ENCODE measurements at regions of chr17 and their contacts with region 1.

Region 1: GRCh38 chr17:41548844-41549595 is 20.9 kb upstream of the KRT19 start:
- DNase-seq: peak; percentile 80 to 95
- H3K4me3 ChIP-seq: peak overlapping the region in 3 of 4 experiments; percentile 13 to 43 (median 16); a peak in 4 of 8 replicates
- H3K27ac ChIP-seq: peak overlapping the region; percentile 64; the same call in 1 of the 2 replicates
- H3K4me1 ChIP-seq: peaks cover 8 to 24% (median 13%) of the 10 kb centered on the region in 4 experiments
- H3K27me3 ChIP-seq: no peaks in the 10 kb centered on the region; a peak in 2 of 7 replicates
- CTCF ChIP-seq: peak; percentile 87 to 97 (median 96)
- EP300 ChIP-seq: peak in 1 of 2 experiments; percentile 51; a peak in 1 of 3 replicates
- POLR2A ChIP-seq: peak in 1 of 2 experiments; percentile 63; a peak in 1 of 3 replicates
- RAD21 ChIP-seq: peak; percentile 91 to 96

Region 2: GRCh38 chr17:40854159-40854814 is 694.7 kb before region 1 on chr17:
- CTCF ChIA-PET with region 1: interaction called, 12 read pairs
- POLR2A ChIA-PET with region 1: no interaction called
- DNase-seq: no peak
- H3K4me3 ChIP-seq: no peak overlapping the region
- H3K27ac ChIP-seq: no peak overlapping the region
- H3K4me1 ChIP-seq: peaks cover 0 to 8% (median 2%) of the 10 kb centered on the region in 4 experiments; a peak in 3 of 7 replicates
- H3K27me3 ChIP-seq: no peaks in the 10 kb centered on the region; a peak in 1 of 7 replicates
- CTCF ChIP-seq: no peak
- EP300 ChIP-seq: no peak
- POLR2A ChIP-seq: no peak
- RAD21 ChIP-seq: no peak

Region 3: DNA sequence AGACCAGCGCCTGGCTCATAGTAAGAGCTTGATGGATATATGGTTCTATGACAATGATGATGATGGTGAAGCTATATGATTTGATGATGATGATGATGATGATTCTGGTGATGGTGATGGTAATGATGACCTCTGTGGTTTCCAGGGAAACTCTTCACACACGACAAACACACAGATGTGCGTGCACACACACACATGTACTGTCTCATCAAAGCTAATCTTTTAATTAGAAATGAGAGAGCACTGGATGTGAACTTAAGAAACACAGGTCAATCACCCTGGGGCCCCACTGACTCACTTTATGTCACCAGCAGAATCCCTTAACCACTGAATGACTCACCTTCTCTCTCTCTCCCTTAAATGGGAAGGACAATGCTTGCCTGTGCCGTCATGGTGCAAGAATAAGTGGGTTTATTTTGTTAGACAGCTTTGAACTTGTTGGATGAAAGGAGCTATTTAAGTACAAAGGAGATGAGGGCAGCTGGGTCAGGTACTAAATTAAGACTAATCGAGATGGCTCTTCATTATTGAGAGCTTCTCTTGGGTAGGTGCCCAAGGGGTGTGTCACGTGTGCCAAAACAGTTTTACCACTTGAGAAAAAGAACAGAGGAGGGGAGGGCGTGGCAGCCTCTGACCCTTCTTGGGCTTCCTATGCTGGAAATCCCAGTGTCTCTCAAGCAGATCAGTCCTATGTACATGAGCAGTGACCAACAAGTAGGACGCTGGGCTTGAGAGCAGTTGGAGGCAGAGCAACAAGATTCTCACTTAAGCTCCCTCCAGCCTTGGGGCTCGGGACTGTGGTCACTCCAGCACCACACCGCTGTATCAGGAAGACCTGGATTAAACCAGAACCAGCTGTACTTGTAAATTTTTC is 145.0 kb before region 1 on chr17:
- CTCF ChIA-PET with region 1: interaction called, 15 read pairs
- POLR2A ChIA-PET with region 1: no interaction called
- DNase-seq: no peak
- H3K4me3 ChIP-seq: no peak overlapping the region
- H3K27ac ChIP-seq: no peak overlapping the region
- H3K4me1 ChIP-seq: no peaks in the 10 kb centered on the region; a peak in 1 of 7 replicates
- H3K27me3 ChIP-seq: no peaks in the 10 kb centered on the region; a peak in 1 of 7 replicates
- CTCF ChIP-seq: no peak
- EP300 ChIP-seq: no peak
- POLR2A ChIP-seq: no peak
- RAD21 ChIP-seq: no peak

Region 4: GRCh38 chr17:41462705-41463104 is 86.3 kb before region 1 on chr17:
- CTCF ChIA-PET with region 1: interaction called, 17 read pairs
- POLR2A ChIA-PET with region 1: interaction called, 3 read pairs
- DNase-seq: no peak
- H3K4me3 ChIP-seq: no peak overlapping the region
- H3K27ac ChIP-seq: no peak overlapping the region
- H3K4me1 ChIP-seq: no peaks in the 10 kb centered on the region
- H3K27me3 ChIP-seq: no peaks in the 10 kb centered on the region
- CTCF ChIP-seq: no peak
- EP300 ChIP-seq: no peak
- POLR2A ChIP-seq: no peak
- RAD21 ChIP-seq: no peak

Region 5: GRCh38 chr17:41538565-41538991 is 10.4 kb before region 1 on chr17:
- CTCF ChIA-PET with region 1: interaction called, 79 read pairs
- POLR2A ChIA-PET with region 1: interaction called, 5 read pairs
- DNase-seq: no peak
- H3K4me3 ChIP-seq: no peak overlapping the region
- H3K27ac ChIP-seq: no peak overlapping the region
- H3K4me1 ChIP-seq: peaks cover 10 to 23% (median 16%) of the 10 kb centered on the region in 4 experiments
- H3K27me3 ChIP-seq: no peaks in the 10 kb centered on the region; a peak in 1 of 7 replicates
- CTCF ChIP-seq: no peak
- EP300 ChIP-seq: no peak
- POLR2A ChIP-seq: no peak
- RAD21 ChIP-seq: no peak

Region 6: GRCh38 chr17:41624208-41625101 is 75.4 kb after region 1 on chr17 and contains the start of gene KRT17:
- CTCF ChIA-PET with region 1: interaction called, 20 read pairs
- POLR2A ChIA-PET with region 1: no interaction called
- DNase-seq: no peak
- H3K4me3 ChIP-seq: no peak within 1 kb of the TSS
- H3K27ac ChIP-seq: no peak within 1 kb of the TSS
- H3K4me1 ChIP-seq: peaks cover 0 to 6% (median 0%) of the 10 kb centered on the region in 4 experiments; a peak in 1 of 7 replicates
- H3K27me3 ChIP-seq: no peaks in the 10 kb centered on the region
- CTCF ChIP-seq: peak in 2 of 3 experiments; percentile 10 to 23; a peak in 2 of 4 replicates
- EP300 ChIP-seq: no peak
- POLR2A ChIP-seq: no peak
- RAD21 ChIP-seq: 0 out of 4 replicates have a peak, but pooled peaks of 1 of the 2 experiments have one; percentile 18
- total RNA-seq, gene KRT17: 0.36 and 0.50 TPM in 2 replicates

Region 7: GRCh38 chr17:41688699-41689496 is 139.9 kb after region 1 on chr17 and contains the start of gene EIF1:
- CTCF ChIA-PET with region 1: interaction called, 12 read pairs
- POLR2A ChIA-PET with region 1: interaction called, 10 read pairs
- DNase-seq: peak; percentile 100
- H3K4me3 ChIP-seq: peak within 1 kb of the TSS; percentile 92 to 99 (median 94)
- H3K27ac ChIP-seq: peak within 1 kb of the TSS; percentile 97
- H3K4me1 ChIP-seq: peaks cover 0 to 3% (median 2%) of the 10 kb centered on the region in 4 experiments; a peak in 4 of 7 replicates
- H3K27me3 ChIP-seq: no peaks in the 10 kb centered on the region
- CTCF ChIP-seq: no peak
- EP300 ChIP-seq: peak in 1 of 2 experiments; percentile 48; a peak in 1 of 3 replicates
- POLR2A ChIP-seq: peak; percentile 99
- RAD21 ChIP-seq: no peak
- total RNA-seq, gene EIF1: 528 and 539 TPM in 2 replicates

Measured in H1 (cell line).